Left ventricle myocardium inferior (tissue), 1 donor: ENCODE measurements at regions of chr9 and their contacts with region 1.

Region 1: DNA sequence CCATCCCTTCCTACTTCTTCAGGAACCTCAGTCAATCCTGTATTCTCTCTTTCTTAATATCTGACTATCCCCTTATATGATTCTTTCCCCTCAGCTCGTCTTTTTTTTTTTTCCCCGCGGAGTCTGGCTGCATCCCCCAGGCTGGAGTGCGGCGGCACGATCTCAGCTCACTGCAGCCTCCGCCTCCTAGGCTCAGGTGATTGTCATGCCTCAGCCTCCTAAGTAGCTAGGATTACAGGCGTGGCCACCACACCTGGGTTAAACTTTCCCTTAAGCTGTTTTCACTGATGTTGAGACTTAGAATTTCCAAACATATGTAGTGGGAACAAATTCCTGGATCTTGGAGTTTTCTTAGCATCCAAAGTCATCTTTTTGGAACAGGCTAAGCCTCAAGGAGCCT is 13.3 kb upstream of the RUSC2 start:
- DNase-seq: no peak
- H3K4me3 ChIP-seq: no peak overlapping the region
- H3K27ac ChIP-seq: no peak overlapping the region
- H3K4me1 ChIP-seq: no peaks in the 10 kb centered on the region
- H3K27me3 ChIP-seq: no peaks in the 10 kb centered on the region
- CTCF ChIP-seq: no peak

Region 2: DNA sequence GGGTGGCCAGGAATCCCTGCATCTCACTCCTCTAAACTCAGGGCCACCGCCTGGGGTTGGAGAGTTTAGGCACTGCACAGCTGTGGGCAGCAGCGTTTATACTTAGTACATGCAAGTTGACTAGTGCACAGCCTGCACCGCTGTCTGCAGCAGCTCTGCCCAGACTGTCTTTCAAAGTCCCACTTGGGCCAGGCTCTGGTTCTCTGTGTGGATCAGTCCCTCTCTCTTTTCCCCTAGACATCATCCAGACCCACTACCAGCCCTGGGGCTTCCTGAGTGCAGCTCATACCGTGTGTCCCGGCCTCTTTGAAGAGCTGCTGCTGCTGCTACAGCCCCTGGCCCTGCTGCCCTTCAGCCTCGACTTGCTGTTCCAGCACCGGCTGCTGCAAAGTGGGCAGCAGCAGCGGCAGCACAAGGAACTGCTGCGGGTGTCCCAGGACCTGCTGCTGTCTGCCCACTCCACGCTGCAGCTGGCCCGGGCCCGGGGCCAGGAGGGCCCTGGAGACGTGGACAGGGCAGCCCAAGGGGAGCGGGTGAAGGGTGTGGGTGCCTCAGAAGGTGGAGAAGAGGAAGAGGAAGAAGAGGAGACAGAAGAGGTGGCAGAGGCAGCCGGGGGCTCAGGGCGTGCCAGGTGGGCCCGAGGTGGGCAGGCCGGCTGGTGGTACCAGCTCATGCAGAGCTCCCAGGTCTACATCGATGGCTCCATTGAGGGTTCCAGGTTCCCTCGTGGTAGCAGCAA is 83.4 kb after region 1 on chr9:
- intact Hi-C with region 1: loop called (anchors 5 kb)
- DNase-seq: no peak
- H3K4me3 ChIP-seq: no peak overlapping the region
- H3K27ac ChIP-seq: peak overlapping the region; percentile 12
- H3K4me1 ChIP-seq: peaks cover 32% of the 10 kb centered on the region
- H3K27me3 ChIP-seq: no peaks in the 10 kb centered on the region
- CTCF ChIP-seq: no peak